ENCODE measurements at regions of chr1 and their contacts with region 1.

Region 1: GRCh38 chr1:8649027-8649426 is 168.4 kb downstream of the RERE start:
- DNase-seq: no peak
- H3K4me3 Mint-ChIP-seq: peak overlapping the region; percentile 35
- H3K27ac Mint-ChIP-seq: peak overlapping the region; percentile 62
- H3K4me1 Mint-ChIP-seq: peaks cover 45% of the 10 kb centered on the region
- H3K27me3 Mint-ChIP-seq: no peaks in the 10 kb centered on the region

Region 2: GRCh38 chr1:8477166-8477982 is 171.7 kb before region 1 on chr1:
- intact Hi-C with region 1: no loop called
- DNase-seq: peak; percentile 68
- H3K4me3 Mint-ChIP-seq: peak overlapping the region; percentile 54
- H3K27ac Mint-ChIP-seq: peak overlapping the region; percentile 71
- H3K4me1 Mint-ChIP-seq: peaks cover 49% of the 10 kb centered on the region
- H3K27me3 Mint-ChIP-seq: no peaks in the 10 kb centered on the region

Region 3: DNA sequence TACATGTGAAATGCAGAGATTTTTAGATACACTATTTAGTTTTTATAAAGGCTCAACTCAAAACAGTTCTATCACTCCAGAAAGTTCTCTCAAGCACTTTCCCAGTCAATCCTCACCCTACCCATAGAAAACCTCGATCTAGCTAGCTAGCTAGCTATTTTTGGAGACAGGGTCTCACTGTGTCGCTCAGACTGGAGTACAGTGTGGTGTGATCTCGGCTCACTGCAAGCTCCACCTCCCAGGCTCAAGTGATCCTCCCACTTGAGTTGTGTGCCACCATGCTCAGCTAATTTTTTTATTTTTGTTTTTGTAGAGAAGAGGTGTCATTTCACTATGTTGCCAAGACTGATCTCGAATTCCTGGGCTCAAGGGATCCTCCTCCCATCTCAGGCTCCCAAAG is 68.5 kb before region 1 on chr1:
- intact Hi-C with region 1: no loop called
- DNase-seq: no peak
- H3K4me3 Mint-ChIP-seq: no peak overlapping the region
- H3K27ac Mint-ChIP-seq: no peak overlapping the region
- H3K4me1 Mint-ChIP-seq: peaks cover 2% of the 10 kb centered on the region
- H3K27me3 Mint-ChIP-seq: no peaks in the 10 kb centered on the region

Region 4: GRCh38 chr1:8590526-8591351 is 58.3 kb before region 1 on chr1:
- intact Hi-C with region 1: no loop called
- DNase-seq: peak; percentile 69
- H3K4me3 Mint-ChIP-seq: peak overlapping the region; percentile 23
- H3K27ac Mint-ChIP-seq: peak overlapping the region; percentile 65
- H3K4me1 Mint-ChIP-seq: peaks cover 33% of the 10 kb centered on the region
- H3K27me3 Mint-ChIP-seq: no peaks in the 10 kb centered on the region

Region 5: GRCh38 chr1:8629241-8630091 is 19.6 kb before region 1 on chr1:
- intact Hi-C with region 1: loop called (anchors 1 kb)
- DNase-seq: no peak
- H3K4me3 Mint-ChIP-seq: peak overlapping the region; percentile 31
- H3K27ac Mint-ChIP-seq: peak overlapping the region; percentile 50
- H3K4me1 Mint-ChIP-seq: peaks cover 45% of the 10 kb centered on the region
- H3K27me3 Mint-ChIP-seq: no peaks in the 10 kb centered on the region

Region 6: DNA sequence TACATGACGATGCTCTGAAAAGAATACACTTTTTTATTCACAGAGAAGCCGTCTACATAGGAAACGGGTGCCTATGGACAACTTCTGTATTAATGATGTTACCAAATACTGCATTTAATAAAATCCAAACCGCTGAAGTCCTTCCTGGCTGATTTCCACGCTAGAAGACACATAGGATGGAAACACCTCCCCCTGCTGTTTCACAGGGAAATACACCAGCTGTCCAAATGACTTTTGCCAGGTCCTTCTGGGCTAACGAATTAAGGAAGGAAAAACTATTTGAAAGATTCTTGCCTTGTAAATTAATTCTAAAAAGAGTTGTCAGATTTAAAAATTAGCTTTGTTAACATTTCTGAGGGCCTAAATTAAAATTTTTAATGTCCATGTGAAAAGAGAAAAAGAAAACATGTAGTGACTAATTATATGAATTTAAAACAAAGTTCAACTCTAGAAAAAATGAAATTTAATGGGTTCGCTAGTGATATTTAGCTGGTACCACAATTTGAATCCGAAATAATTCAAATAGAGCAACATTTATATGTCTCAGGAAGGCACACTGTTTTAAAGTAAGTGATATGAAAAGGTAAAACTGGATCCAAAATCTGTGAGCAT is 22.4 kb after region 1 on chr1:
- intact Hi-C with region 1: loop called (anchors 1 kb)
- DNase-seq: peak; percentile 75
- H3K4me3 Mint-ChIP-seq: no peak overlapping the region
- H3K27ac Mint-ChIP-seq: no peak overlapping the region
- H3K4me1 Mint-ChIP-seq: peaks cover 40% of the 10 kb centered on the region
- H3K27me3 Mint-ChIP-seq: no peaks in the 10 kb centered on the region

Region 7: DNA sequence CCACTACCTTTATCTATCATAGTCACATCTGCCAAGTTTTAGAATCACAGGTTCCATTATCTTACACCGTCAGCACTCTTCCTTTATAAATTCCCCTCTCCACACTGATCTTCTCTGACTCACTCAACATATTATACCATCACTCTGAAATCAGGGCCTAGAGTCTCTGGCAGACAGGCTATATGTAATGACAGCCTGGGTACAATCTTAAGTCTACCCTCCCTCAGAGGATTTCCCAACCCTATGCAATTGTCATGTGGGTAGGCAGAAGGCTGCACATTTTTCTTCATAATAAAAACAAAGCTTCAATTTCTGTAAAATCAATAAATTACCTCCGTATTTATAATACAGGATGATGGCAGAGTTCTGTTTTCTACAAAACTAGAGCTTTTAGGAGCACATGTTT is 30.4 kb after region 1 on chr1:
- intact Hi-C with region 1: loop called (anchors 5 kb)
- DNase-seq: peak; percentile 39
- H3K4me3 Mint-ChIP-seq: no peak overlapping the region
- H3K27ac Mint-ChIP-seq: no peak overlapping the region
- H3K4me1 Mint-ChIP-seq: peaks cover 31% of the 10 kb centered on the region
- H3K27me3 Mint-ChIP-seq: no peaks in the 10 kb centered on the region

Measured in activated CD4-positive, alpha-beta T cell treated with anti-CD3 and anti-CD28 coated beads, Interleukin-2, amount 10 ng/mL, durations not matched to agents 24 days and 14 days (primary cell).